Colonic mucosa (tissue), 4 donors: ENCODE measurements at regions of chr10 and their contacts with region 1.

Region 1: DNA sequence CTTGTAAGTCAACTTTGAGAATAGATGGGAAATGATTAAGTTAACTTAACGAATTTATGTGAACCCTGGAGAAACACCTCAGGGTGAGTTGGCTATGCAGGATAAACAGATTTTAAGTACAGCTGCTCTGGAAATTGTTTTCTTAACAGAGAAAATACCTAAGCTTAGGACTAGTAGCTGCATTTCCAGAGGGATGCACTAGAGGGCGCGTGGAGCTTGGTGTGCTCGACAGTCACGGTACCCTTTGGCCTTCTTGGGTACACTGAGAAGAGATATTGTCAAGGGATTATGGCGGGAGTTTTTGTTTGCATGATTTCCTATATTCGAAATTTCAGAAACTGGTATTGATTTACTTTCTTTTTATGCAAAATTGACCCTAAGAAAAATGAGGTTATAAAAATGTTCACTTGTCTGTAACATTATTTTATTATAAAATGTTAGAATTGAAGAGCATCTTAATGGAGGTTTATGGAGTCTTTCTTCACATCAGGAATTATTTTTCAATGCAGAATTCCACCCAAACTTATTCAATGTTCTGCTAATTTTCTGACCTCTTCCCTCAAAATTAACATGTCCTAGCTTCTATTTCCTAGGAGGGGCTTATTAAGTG is 58.4 kb upstream of the MYO3A start:
- DNase-seq: peak; percentile 80
- H3K4me3 ChIP-seq: no peak overlapping the region
- H3K27ac ChIP-seq: no peak overlapping the region
- H3K4me1 ChIP-seq: no peaks in the 10 kb centered on the region
- H3K27me3 ChIP-seq: no peaks in the 10 kb centered on the region
- CTCF ChIP-seq: peak; percentile 82

Region 2: DNA sequence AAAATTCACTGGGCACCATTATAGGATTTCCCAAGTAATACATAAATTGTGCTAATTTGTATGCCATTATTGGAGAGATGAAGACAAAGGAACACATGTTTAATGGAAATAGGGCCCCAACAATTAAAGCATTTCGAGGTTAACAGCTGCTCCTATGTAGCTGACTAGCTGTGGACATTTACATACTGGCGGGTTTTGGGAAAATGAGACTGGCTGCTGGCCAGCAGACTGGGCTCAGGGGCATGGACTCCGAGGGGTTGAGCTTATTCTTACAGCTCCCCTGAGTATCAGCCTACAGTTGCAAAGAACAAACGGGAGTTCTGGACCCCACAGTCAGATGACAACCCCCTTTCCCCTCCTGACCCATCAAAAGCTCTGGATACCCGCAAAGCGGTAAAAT is 33.5 kb before region 1 on chr10:
- intact Hi-C with region 1: no loop called
- DNase-seq: no peak
- H3K4me3 ChIP-seq: no peak overlapping the region
- H3K27ac ChIP-seq: no peak overlapping the region
- H3K4me1 ChIP-seq: no peaks in the 10 kb centered on the region
- H3K27me3 ChIP-seq: no peaks in the 10 kb centered on the region
- CTCF ChIP-seq: no peak

Region 3: DNA sequence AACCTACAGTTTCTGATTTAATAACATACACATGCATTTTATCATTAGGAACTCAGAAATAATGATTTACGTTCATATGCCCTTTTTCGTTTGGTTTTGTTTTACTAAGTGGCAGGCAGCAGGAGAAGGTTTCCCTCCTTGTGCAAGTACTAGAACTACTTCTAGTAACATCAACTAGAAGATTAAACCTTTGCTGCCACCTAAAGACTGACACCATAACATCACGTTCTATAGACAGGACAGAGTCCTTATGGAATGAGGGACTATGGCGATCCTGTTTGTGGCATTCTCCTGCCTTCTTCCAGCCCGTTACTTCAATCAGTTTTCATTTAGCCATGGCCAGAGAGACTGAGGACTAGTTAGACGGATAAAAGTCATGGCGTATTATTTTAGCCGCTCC is 394.1 kb after region 1 on chr10:
- intact Hi-C with region 1: loop called (anchors 5 kb)
- DNase-seq: no peak
- H3K4me3 ChIP-seq: no peak overlapping the region
- H3K27ac ChIP-seq: no peak overlapping the region
- H3K4me1 ChIP-seq: no peaks in the 10 kb centered on the region
- H3K27me3 ChIP-seq: no peaks in the 10 kb centered on the region
- CTCF ChIP-seq: no peak

Region 4: GRCh38 chr10:26556748-26557640 is 681.3 kb after region 1 on chr10:
- intact Hi-C with region 1: loop called (anchors 10 kb)
- DNase-seq: no peak
- H3K4me3 ChIP-seq: no peak overlapping the region
- H3K27ac ChIP-seq: no peak overlapping the region
- H3K4me1 ChIP-seq: no peaks in the 10 kb centered on the region
- H3K27me3 ChIP-seq: no peaks in the 10 kb centered on the region
- CTCF ChIP-seq: peak; percentile 80